Right lobe of liver (tissue), 6 donors: ENCODE measurements at regions of chr20 and their contacts with region 1.

Region 1: GRCh38 chr20:40689943-40690835 is 1.2 kb upstream of the MAFB start:
- DNase-seq: peak; percentile 93 to 95 (median 95)
- ATAC-seq: peak; percentile 59 to 72 (median 66)
- H3K4me3 ChIP-seq: peak overlapping the region; percentile 47 to 80 (median 66)
- H3K27ac ChIP-seq: peak overlapping the region; percentile 89 to 98 (median 96)
- H3K4me1 ChIP-seq: peaks cover 0 to 9% (median 4%) of the 10 kb centered on the region in 4 donors
- H3K27me3 ChIP-seq: no peaks in the 10 kb centered on the region
- CTCF ChIP-seq: peak; percentile 91 to 98 (median 94)
- POLR2A ChIP-seq: peak; percentile 57

Region 2: DNA sequence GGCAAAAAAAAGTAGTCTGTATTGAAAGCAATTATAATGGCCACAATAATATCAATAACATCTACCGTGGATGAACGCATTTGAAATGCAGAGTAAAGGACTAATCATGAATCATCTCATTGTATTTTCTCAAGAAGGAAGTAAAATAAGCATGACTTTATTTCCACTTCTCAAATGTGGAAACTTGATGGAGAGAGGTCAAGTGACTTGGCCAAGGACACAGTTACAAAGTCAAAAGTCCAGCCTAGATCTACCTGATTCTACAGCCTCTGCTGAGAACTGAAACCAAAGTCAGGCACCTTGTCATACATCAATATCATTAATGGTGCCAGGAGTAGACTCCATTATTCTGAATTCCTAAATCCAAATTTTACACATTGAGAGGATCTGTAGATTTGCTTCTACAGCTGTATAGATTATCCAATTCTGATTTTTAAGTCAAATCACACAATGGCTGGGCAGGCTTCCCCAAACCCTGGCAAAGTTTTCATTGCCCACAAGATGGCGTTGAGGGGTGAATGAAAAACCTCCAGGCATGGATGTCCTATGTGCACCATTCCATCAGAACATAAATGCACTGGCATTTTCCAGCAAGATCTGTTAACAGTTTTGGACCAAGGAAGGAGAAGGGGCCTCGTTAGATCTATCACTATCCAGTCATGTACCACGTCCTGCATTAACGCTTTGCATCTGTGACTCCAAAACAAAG is 424.2 kb before region 1 on chr20:
- intact Hi-C with region 1: loop called (anchors 10 kb)
- DNase-seq: peak in 1 of 3 donors; percentile 59
- ATAC-seq: peak; percentile 67 to 84 (median 80)
- H3K4me3 ChIP-seq: no peak overlapping the region
- H3K27ac ChIP-seq: no peak overlapping the region
- H3K4me1 ChIP-seq: no peaks in the 10 kb centered on the region
- H3K27me3 ChIP-seq: no peaks in the 10 kb centered on the region
- CTCF ChIP-seq: peak; percentile 42 to 56 (median 44)
- POLR2A ChIP-seq: no peak

Region 3: DNA sequence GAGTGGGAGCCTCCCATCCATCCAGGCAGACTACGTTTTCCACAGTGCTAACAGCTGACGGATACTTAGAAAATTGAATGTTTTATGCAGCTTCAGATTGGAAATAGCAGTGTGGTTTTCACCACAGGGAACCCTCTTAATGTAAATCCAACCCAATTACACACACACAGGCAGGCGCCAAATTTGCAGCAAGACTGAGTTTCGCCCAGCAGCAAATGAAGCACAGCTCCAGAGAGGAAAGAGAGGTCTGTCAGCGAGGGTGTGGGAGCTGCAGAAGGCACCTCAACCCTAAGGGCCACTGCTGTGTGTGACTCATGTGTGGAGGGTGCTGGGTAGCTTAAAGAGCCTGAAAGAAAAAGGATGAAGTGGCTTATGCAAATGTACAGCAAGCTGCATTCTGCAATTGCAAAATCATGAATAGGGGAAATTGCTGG is 366.8 kb before region 1 on chr20:
- intact Hi-C with region 1: no loop called
- DNase-seq: peak in 1 of 3 donors; percentile 29
- ATAC-seq: peak; percentile 33 to 75 (median 68)
- H3K4me3 ChIP-seq: no peak overlapping the region
- H3K27ac ChIP-seq: no peak overlapping the region
- H3K4me1 ChIP-seq: no peaks in the 10 kb centered on the region
- H3K27me3 ChIP-seq: no peaks in the 10 kb centered on the region
- CTCF ChIP-seq: no peak
- POLR2A ChIP-seq: no peak

Region 4: GRCh38 chr20:40551125-40551530 is 139.1 kb before region 1 on chr20:
- intact Hi-C with region 1: loop called in 1 of 2 experiments (anchors 10 kb)
- DNase-seq: peak; percentile 82 to 95 (median 89)
- ATAC-seq: peak; percentile 92 to 98 (median 96)
- H3K4me3 ChIP-seq: peak overlapping the region in 2 of 3 donors; percentile 14 to 28
- H3K27ac ChIP-seq: peak overlapping the region; percentile 56 to 78 (median 62)
- H3K4me1 ChIP-seq: peaks cover 0 to 26% (median 5%) of the 10 kb centered on the region in 4 donors
- H3K27me3 ChIP-seq: no peaks in the 10 kb centered on the region
- CTCF ChIP-seq: peak in 1 of 4 donors; percentile 18
- POLR2A ChIP-seq: no peak

Region 5: GRCh38 chr20:40628877-40629276 is 61.3 kb before region 1 on chr20:
- intact Hi-C with region 1: no loop called
- DNase-seq: no peak
- ATAC-seq: peak in 2 of 4 donors; percentile 69 to 81
- H3K4me3 ChIP-seq: no peak overlapping the region
- H3K27ac ChIP-seq: no peak overlapping the region
- H3K4me1 ChIP-seq: peaks cover 0 to 11% (median 0%) of the 10 kb centered on the region in 4 donors
- H3K27me3 ChIP-seq: no peaks in the 10 kb centered on the region
- CTCF ChIP-seq: no peak
- POLR2A ChIP-seq: no peak